GM23248 (cell line): ENCODE measurements at regions of chr5 and their contacts with region 1.

Region 1: DNA sequence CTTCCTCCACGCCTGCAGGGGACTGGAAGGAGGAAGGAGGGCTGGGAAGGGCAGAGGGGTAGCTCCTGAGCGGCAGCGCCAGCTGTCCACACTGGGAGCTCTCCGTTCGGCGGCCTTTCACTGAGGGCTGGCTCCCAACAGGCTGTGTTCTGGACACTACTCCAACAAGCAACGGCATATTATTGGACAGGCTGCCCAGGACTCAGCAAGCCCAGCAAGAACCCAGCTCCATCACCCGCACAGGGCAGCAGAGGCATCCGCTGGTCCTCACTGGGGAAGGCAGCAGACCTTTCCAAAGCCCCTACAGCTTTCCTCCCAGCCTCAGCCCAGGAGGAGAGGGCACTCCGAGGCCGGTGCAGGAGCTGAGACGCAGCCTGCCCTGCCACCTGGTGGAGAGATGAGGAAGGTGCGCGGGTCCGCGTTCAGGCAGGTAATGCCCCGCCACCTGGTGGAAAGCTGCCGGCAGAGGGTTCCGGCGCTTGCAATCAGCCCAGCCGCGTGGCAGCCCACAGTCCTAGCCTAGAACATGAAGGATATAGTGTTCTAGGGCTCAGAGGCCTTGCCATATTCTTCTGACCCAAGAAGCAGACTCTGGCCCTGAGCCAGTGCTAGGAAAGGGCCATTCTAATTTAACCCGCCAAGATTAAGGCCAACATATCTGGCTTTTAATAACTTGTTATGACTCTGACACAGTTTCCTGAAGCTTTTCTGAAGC is 74.4 kb downstream of the NRG2 start:
- DNase-seq: peak; percentile 85
- H3K4me3 ChIP-seq: no peak overlapping the region
- H3K27ac ChIP-seq: no peak overlapping the region
- H3K4me1 ChIP-seq: no peaks in the 10 kb centered on the region
- H3K27me3 ChIP-seq: peaks cover 9% of the 10 kb centered on the region

Region 2: DNA sequence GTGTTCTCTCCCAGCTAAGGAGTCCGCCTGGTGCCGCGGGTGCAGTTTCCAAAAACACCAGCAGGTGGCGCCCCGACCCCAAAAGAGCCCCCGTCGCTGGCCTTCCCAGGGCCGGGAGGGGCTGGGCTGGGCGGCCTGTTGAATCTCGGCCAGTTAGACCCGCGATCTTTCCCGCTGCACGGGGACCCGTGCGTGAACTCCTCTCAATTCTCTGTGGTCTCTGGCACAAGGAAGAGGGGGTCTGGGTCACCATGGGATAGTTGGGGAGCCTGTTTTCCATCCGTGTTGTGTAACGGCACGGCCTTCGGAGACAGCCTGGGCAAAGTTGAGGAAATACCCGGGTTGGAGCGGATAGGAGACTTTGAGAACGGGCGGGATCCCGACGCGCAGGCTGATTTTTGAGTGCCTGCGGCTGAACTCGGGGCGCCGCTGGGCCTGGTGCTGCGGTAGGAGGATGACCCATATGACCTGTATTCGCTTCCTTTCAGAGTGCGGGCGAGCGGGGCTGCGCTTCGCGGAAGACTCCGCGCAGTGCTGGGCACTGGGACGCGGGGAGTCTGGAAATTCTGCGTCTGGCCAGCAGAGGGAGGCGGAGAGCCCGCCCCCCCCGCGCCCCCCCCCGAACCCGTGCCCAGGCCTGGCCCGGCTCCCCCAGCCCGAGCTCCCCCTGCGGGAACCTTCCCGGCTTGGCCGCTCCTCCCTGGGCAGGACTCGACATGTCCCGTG is 181.0 kb before region 1 on chr5:
- in situ Hi-C with region 1: loop called (anchors 10 kb)
- DNase-seq: peak; percentile 83
- H3K4me3 ChIP-seq: peak overlapping the region; percentile 74
- H3K27ac ChIP-seq: no peak overlapping the region
- H3K4me1 ChIP-seq: no peaks in the 10 kb centered on the region; the same call in 1 of the 2 replicates
- H3K27me3 ChIP-seq: peaks cover 15% of the 10 kb centered on the region